Heart left ventricle (tissue), 16 donors: ENCODE measurements at regions of chr12 and their contacts with region 1.

Region 1: GRCh38 chr12:64610149-64610678 is at the start of gene RASSF3:
- DNase-seq: peak; percentile 82 to 91 (median 84)
- ATAC-seq: peak; percentile 38 to 93 (median 84)
- H3K4me3 ChIP-seq: peak within 1 kb of the TSS; percentile 67 to 99 (median 96)
- H3K27ac ChIP-seq: peak within 1 kb of the TSS; percentile 90 to 99 (median 97)
- H3K4me1 ChIP-seq: peaks cover 0 to 33% (median 20%) of the 10 kb centered on the region in 12 donors
- H3K27me3 ChIP-seq: no peaks in the 10 kb centered on the region
- CTCF ChIP-seq: no peak
- POLR2A ChIP-seq: peak in 1 of 2 donors; percentile 71
- total RNA-seq, gene RASSF3: 59.7 to 116 (median 93.4) TPM

Region 2: DNA sequence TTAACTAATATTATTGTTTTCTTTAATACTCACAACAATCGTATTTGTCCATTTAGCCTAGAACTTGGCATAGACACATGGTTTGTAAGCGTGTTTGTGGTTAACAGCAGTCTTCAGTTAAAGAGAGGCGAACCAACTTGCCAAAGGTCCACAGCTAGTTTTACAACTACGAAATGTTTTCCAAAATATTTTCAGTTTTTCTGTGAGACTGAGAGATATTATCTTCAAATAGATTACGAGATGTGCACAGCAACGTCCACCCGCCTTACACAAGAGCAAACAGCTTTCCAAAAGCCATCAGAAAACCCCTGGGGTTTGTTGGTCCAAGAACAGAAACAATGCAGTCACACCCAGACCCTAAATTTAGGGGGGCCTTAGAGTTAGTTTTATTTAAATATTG is 58.5 kb before region 1 on chr12:
- intact Hi-C with region 1: loop called in 8 of 10 experiments (anchors 1 to 10 kb)
- DNase-seq: no peak
- ATAC-seq: no peak
- H3K4me3 ChIP-seq: no peak overlapping the region
- H3K27ac ChIP-seq: peak overlapping the region in 2 of 12 donors; percentile 18 to 23
- H3K4me1 ChIP-seq: peaks cover 0 to 14% (median 0%) of the 10 kb centered on the region in 12 donors
- H3K27me3 ChIP-seq: no peaks in the 10 kb centered on the region
- CTCF ChIP-seq: no peak
- POLR2A ChIP-seq: no peak

Region 3: GRCh38 chr12:64577046-64577445 is 33.2 kb before region 1 on chr12:
- intact Hi-C with region 1: loop called in 2 of 10 experiments (anchors 5 kb)
- DNase-seq: no peak
- ATAC-seq: peak in 3 of 4 donors; percentile 49 to 81 (median 76)
- H3K4me3 ChIP-seq: no peak overlapping the region
- H3K27ac ChIP-seq: no peak overlapping the region
- H3K4me1 ChIP-seq: peaks cover 0 to 10% (median 0%) of the 10 kb centered on the region in 12 donors
- H3K27me3 ChIP-seq: no peaks in the 10 kb centered on the region
- CTCF ChIP-seq: no peak
- POLR2A ChIP-seq: no peak

Region 4: GRCh38 chr12:64650762-64651161 is 40.5 kb after region 1 on chr12:
- intact Hi-C with region 1: no loop called
- DNase-seq: no peak
- ATAC-seq: peak; percentile 34 to 74 (median 60)
- H3K4me3 ChIP-seq: no peak overlapping the region
- H3K27ac ChIP-seq: peak overlapping the region in 11 of 12 donors; percentile 9 to 75 (median 44)
- H3K4me1 ChIP-seq: peaks cover 0 to 55% (median 25%) of the 10 kb centered on the region in 12 donors
- H3K27me3 ChIP-seq: no peaks in the 10 kb centered on the region
- CTCF ChIP-seq: no peak
- POLR2A ChIP-seq: no peak

Region 5: GRCh38 chr12:64679487-64679983 is 69.3 kb after region 1 on chr12:
- intact Hi-C with region 1: loop called in 8 of 10 experiments (anchors 5 kb)
- DNase-seq: peak; percentile 60 to 88 (median 79)
- ATAC-seq: peak in 3 of 4 donors; percentile 51 to 55 (median 55)
- H3K4me3 ChIP-seq: peak overlapping the region in 5 of 12 donors; percentile 6 to 19 (median 8)
- H3K27ac ChIP-seq: peak overlapping the region; percentile 37 to 89 (median 81)
- H3K4me1 ChIP-seq: peaks cover 2 to 99% (median 76%) of the 10 kb centered on the region in 12 donors
- H3K27me3 ChIP-seq: no peaks in the 10 kb centered on the region
- CTCF ChIP-seq: no peak
- POLR2A ChIP-seq: no peak

Region 6: GRCh38 chr12:64696080-64696741 is 86.0 kb after region 1 on chr12:
- intact Hi-C with region 1: loop called in 6 of 10 experiments (anchors 5 kb)
- DNase-seq: no peak
- ATAC-seq: peak in 2 of 4 donors; percentile 12 to 19
- H3K4me3 ChIP-seq: no peak overlapping the region
- H3K27ac ChIP-seq: peak overlapping the region in 6 of 12 donors; percentile 16 to 42 (median 32)
- H3K4me1 ChIP-seq: peaks cover 0 to 48% (median 13%) of the 10 kb centered on the region in 12 donors
- H3K27me3 ChIP-seq: no peaks in the 10 kb centered on the region
- CTCF ChIP-seq: peak in 10 of 12 donors; percentile 30 to 65 (median 53)
- POLR2A ChIP-seq: no peak